Left colon (tissue), 2 donors: ENCODE measurements at regions of chr5 and their contacts with region 1.

Region 1: DNA sequence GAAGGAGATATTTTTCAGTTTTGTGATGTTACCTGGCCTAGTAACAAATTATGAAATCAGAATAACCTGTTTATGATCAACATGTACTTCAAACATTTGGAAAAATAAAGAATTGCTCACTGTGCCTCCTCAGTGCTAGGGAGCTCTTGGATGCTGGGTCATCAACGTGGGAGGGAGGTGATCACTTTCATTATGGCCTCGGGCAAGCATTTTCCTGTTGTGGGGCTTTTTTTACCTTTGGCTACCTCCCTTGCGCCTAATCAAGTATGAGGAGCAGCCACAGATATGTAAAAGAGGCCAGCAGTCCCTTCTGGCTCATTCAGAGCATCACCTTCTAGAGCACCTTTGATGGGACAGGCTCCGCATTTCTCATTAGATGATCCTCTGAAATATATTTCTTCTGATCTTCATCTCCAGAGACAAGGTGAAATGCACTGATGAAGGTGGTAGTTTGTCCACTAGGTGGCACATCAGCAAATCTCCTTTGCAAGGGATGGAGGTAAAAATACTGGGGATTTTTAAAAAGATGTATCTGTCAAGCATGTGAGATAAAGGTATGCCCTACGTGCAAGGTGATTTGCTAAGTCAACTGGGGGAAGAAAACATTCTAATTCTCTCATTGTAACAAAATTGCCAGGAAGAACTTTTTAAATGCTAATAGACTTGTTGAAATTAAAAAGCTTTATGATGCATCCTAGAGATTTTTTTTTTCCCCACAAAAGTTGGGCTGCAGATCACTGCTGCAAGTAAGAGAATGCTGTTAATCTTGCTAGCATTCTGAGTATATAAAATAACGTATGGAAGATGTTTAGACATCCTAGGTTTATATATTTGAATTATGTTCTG is 218.2 kb downstream of the MAST4 start:
- DNase-seq: peak in 1 of 2 donors; percentile 26
- ATAC-seq: peak; percentile 65

Region 2: GRCh38 chr5:66477596-66477995 is 336.8 kb before region 1 on chr5:
- intact Hi-C with region 1: no loop called
- DNase-seq: no peak
- ATAC-seq: no peak

Region 3: GRCh38 chr5:66701244-66701643 is 113.1 kb before region 1 on chr5:
- intact Hi-C with region 1: no loop called
- DNase-seq: no peak
- ATAC-seq: no peak

Region 4: GRCh38 chr5:66757188-66757833 is 57.1 kb before region 1 on chr5:
- intact Hi-C with region 1: no loop called
- DNase-seq: peak in 1 of 2 donors; percentile 62
- ATAC-seq: peak; percentile 45

Region 5: GRCh38 chr5:66864331-66864840 is 50.0 kb after region 1 on chr5:
- intact Hi-C with region 1: loop called in 1 of 2 experiments (anchors 10 kb)
- DNase-seq: no peak
- ATAC-seq: peak; percentile 30